GM12878 (cell line): ENCODE measurements at regions of chr1 and their contacts with region 1.

Region 1: GRCh38 chr1:206912445-206913095 is 9.2 kb downstream of the FCMR start:
- DNase-seq: no peak
- ATAC-seq: peak; percentile 78
- H3K4me3 ChIP-seq: no peak overlapping the region
- H3K27ac ChIP-seq: no peak overlapping the region
- H3K4me1 ChIP-seq: peaks cover 38% of the 10 kb centered on the region
- H3K27me3 ChIP-seq: no peaks in the 10 kb centered on the region
- CTCF ChIP-seq: peak; percentile 71 to 90 (median 77); a peak in 5 of 6 replicates
- EP300 ChIP-seq: no peak
- POLR2A ChIP-seq: peak; percentile 40; the same call in 1 of the 2 replicates
- RAD21 ChIP-seq: peak; percentile 76

Region 2: DNA sequence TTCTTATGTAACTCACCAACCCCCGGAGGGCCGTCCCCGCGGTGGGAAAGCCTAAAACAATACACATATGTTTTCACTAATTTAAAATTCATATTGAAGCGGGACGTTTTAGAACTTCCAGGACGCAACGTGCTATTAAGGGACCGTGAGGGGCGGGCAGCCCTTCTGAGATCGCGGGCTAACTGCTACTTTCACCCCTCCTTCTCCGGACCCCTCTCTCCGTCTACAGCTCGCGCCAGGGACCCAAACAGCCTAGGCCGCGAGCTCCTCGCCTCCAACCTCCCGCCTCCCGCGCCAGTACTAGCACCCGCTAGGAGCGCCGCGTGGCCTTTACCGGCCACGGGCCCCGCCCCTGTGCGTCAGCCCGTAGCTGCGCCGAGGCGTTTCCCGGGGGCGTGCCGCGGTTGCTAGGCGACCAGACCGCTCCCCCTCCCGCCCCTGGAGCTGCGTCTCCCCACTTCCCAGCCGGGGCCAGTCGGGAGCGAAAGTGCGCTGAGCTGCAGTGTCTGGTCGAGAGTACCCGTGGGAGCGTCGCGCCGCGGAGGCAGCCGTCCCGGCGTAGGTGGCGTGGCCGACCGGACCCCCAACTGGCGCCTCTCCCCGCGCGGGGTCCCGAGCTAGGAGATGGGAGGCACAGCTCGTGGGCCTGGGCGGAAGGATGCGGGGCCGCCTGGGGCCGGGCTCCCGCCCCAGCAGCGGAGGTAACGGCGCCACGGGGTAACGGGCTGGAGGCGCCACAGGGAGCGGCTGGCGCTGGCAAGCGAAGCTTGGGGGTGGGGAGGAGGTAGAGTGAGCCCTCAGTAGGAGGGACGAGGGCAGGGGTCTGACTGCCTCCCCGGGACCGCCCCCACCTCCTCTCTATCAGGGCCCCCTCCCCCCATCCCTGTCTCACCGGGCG is 277.2 kb before region 1 on chr1 and contains the start of gene DYRK3:
- CTCF ChIA-PET with region 1: interaction called, 22 read pairs
- POLR2A ChIA-PET with region 1: no interaction called
- RAD21 ChIA-PET with region 1: interaction called, 11 read pairs
- SMC1A ChIA-PET with region 1: interaction called, 20 read pairs
- in situ Hi-C with region 1: no loop called
- intact Hi-C with region 1: loop called (anchors 2 kb)
- DNase-seq: peak; percentile 71
- ATAC-seq: peak; percentile 92
- H3K4me3 ChIP-seq: peak within 1 kb of the TSS; percentile 94
- H3K27ac ChIP-seq: peak within 1 kb of the TSS; percentile 62
- H3K4me1 ChIP-seq: peaks cover 26% of the 10 kb centered on the region
- H3K27me3 ChIP-seq: no peaks in the 10 kb centered on the region
- CTCF ChIP-seq: 0 out of 6 replicates have a peak, but pooled peaks of 1 of the 3 experiments have one; percentile 5
- EP300 ChIP-seq: 0 out of 4 replicates have a peak, but pooled peaks of 1 of the 2 experiments have one; percentile 17
- POLR2A ChIP-seq: peak; percentile 94
- RAD21 ChIP-seq: no peak
- polyA plus RNA-seq, gene DYRK3: 1.6 to 2.8 TPM

Region 3: GRCh38 chr1:206734499-206735142 is 177.9 kb before region 1 on chr1:
- CTCF ChIA-PET with region 1: interaction called, 102 read pairs
- POLR2A ChIA-PET with region 1: interaction called, 4 read pairs
- RAD21 ChIA-PET with region 1: interaction called, 55 read pairs
- SMC1A ChIA-PET with region 1: interaction called, 41 read pairs
- in situ Hi-C with region 1: loop called (anchors 5 kb)
- intact Hi-C with region 1: loop called (anchors 2 kb)
- DNase-seq: no peak
- ATAC-seq: peak; percentile 45
- H3K4me3 ChIP-seq: no peak overlapping the region
- H3K27ac ChIP-seq: no peak overlapping the region; the same call in 1 of the 2 replicates
- H3K4me1 ChIP-seq: peaks cover 28% of the 10 kb centered on the region
- H3K27me3 ChIP-seq: no peaks in the 10 kb centered on the region
- CTCF ChIP-seq: peak; percentile 84 to 98 (median 96)
- EP300 ChIP-seq: no peak
- POLR2A ChIP-seq: no peak; the same call in 1 of the 2 replicates
- RAD21 ChIP-seq: peak; percentile 98

Region 4: DNA sequence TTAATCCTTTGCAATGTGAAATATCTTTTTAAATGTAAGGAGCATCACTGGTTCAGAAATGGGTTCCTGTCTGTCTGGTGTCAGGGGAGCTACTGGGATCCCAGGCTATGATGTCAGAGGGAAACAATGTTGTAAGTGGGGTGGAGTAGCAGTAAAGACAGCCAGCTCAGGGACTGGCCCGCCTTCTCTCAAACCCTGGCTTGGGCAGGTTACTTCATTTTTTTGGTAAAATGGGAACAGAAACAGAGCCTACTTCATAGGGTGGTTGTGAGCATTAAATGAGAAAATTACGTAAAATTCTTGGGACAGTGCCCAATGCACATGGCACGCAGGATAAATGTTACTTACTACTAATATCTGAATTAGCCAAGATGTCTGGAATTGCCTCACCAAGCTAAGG is 77.9 kb before region 1 on chr1:
- CTCF ChIA-PET with region 1: interaction called, 23 read pairs
- POLR2A ChIA-PET with region 1: no interaction called
- RAD21 ChIA-PET with region 1: interaction called, 3 read pairs
- SMC1A ChIA-PET with region 1: interaction called, 8 read pairs
- in situ Hi-C with region 1: no loop called
- intact Hi-C with region 1: no loop called
- DNase-seq: no peak
- ATAC-seq: peak; percentile 41; the same call in 2 of the 3 replicates
- H3K4me3 ChIP-seq: no peak overlapping the region
- H3K27ac ChIP-seq: no peak overlapping the region
- H3K4me1 ChIP-seq: peaks cover 32% of the 10 kb centered on the region
- H3K27me3 ChIP-seq: no peaks in the 10 kb centered on the region; a peak in 1 of 4 replicates
- CTCF ChIP-seq: no peak
- EP300 ChIP-seq: no peak
- POLR2A ChIP-seq: no peak
- RAD21 ChIP-seq: no peak

Region 5: DNA sequence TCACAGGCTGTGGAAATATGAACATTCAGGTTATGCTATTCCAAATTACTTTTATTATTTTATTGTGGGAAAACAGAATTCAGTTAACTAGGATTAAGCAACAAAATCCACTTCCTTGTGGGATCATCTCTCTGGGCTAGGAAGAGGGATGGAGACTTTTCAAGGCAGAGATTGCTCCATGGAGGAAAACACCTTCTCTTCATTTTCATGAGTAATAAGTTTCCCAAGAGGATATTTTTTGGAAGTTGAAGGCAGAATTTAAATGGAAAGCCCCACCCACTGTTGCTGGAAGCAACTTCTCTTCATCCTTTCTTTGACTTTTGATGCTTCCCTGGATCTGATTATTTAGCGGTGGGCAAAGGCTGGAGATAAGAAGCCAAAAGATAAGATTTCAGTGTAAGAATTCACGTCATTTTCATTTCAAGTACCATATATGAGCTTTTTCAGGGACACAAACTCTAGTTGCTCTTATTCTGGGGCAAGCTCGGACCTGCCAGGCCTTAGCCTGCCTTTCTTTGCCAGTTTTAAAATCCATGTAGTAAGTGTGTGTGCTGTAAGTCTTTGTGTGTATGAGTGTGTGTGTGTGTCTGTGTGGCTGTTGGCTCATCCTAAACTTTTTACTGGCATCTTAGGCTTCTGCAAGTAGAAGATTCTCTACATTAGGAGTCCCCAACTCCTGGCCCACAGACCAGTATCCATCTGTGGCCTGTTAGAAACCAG is 27.1 kb before region 1 on chr1:
- CTCF ChIA-PET with region 1: interaction called, 20 read pairs
- POLR2A ChIA-PET with region 1: interaction called, 3 read pairs
- RAD21 ChIA-PET with region 1: interaction called, 3 read pairs
- SMC1A ChIA-PET with region 1: interaction called, 16 read pairs
- in situ Hi-C with region 1: no loop called
- intact Hi-C with region 1: no loop called
- DNase-seq: no peak
- ATAC-seq: no peak
- H3K4me3 ChIP-seq: no peak overlapping the region
- H3K27ac ChIP-seq: no peak overlapping the region
- H3K4me1 ChIP-seq: no peaks in the 10 kb centered on the region
- H3K27me3 ChIP-seq: no peaks in the 10 kb centered on the region
- CTCF ChIP-seq: no peak
- EP300 ChIP-seq: no peak
- POLR2A ChIP-seq: no peak
- RAD21 ChIP-seq: no peak

Region 6: GRCh38 chr1:206941858-206942387 is 29.4 kb after region 1 on chr1:
- CTCF ChIA-PET with region 1: interaction called, 643 read pairs
- POLR2A ChIA-PET with region 1: interaction called, 222 read pairs
- RAD21 ChIA-PET with region 1: interaction called, 371 read pairs
- SMC1A ChIA-PET with region 1: interaction called, 3 read pairs
- in situ Hi-C with region 1: no loop called
- intact Hi-C with region 1: no loop called
- DNase-seq: no peak
- ATAC-seq: no peak
- H3K4me3 ChIP-seq: no peak overlapping the region
- H3K27ac ChIP-seq: no peak overlapping the region
- H3K4me1 ChIP-seq: no peaks in the 10 kb centered on the region
- H3K27me3 ChIP-seq: no peaks in the 10 kb centered on the region
- CTCF ChIP-seq: no peak
- EP300 ChIP-seq: no peak
- POLR2A ChIP-seq: no peak
- RAD21 ChIP-seq: no peak

Region 7: DNA sequence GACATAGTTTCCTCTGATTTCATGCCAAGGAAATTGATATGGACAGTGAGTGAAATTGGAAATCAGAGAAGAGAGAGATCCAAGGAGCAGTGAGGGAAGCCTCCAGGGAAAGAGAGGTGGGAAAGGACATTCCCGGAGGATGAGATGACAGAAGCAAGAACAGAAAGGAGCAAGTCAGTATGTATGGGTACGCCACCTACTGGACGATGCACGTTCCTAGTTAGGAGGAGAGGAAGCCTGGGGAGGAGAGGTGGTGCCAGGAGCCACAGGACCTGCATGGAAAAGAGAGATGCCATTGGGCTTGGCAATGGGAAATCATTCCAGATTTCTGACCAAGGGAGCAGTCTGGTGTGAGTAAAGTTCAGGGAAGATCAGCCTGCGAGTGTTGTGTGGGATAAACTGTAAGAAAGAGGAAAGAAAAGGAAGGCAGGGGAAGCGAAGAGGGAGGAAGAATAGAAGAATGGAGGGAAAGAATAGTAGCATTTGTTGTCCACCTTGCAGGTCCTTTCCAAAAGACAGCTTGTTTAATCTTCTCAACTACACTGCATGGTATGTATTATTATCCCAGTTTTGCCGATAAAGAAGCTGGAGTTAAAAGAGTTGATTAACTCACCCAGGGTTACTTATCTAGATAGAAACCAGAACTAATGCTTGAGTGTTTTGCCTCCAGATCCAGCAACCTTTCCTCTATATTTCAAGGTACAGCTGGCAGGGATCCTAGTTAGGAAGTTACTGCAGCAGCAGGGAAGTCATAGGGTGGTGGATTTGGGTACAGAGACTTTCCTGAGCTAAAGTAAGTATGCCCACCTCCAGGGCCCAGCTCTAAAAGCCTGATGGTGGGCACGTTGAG is 92.6 kb after region 1 on chr1:
- CTCF ChIA-PET with region 1: interaction called, 18 read pairs
- POLR2A ChIA-PET with region 1: no interaction called
- RAD21 ChIA-PET with region 1: no interaction called
- SMC1A ChIA-PET with region 1: no interaction called
- in situ Hi-C with region 1: no loop called
- intact Hi-C with region 1: no loop called
- DNase-seq: peak; percentile 7
- ATAC-seq: peak; percentile 96
- H3K4me3 ChIP-seq: no peak overlapping the region
- H3K27ac ChIP-seq: no peak overlapping the region
- H3K4me1 ChIP-seq: no peaks in the 10 kb centered on the region
- H3K27me3 ChIP-seq: peaks cover 2 to 3% of the 10 kb centered on the region in 2 experiments
- CTCF ChIP-seq: peak; percentile 78 to 90 (median 85)
- EP300 ChIP-seq: no peak
- POLR2A ChIP-seq: no peak
- RAD21 ChIP-seq: peak; percentile 41; the same call in 1 of the 2 replicates